ENCODE measurements at regions of chr14 and their contacts with region 1.

Region 1: GRCh38 chr14:101628471-101628966 is 67.2 kb downstream of the DIO3 start:
- DNase-seq: no peak
- H3K4me3 ChIP-seq: peak overlapping the region in 1 of 2 donors; percentile 6
- H3K27ac ChIP-seq: no peak overlapping the region
- H3K4me1 ChIP-seq: peaks cover 15% of the 10 kb centered on the region
- H3K27me3 ChIP-seq: no peaks in the 10 kb centered on the region
- CTCF ChIP-seq: peak; percentile 97 to 99 (median 99)
- POLR2A ChIP-seq: no peak

Region 2: DNA sequence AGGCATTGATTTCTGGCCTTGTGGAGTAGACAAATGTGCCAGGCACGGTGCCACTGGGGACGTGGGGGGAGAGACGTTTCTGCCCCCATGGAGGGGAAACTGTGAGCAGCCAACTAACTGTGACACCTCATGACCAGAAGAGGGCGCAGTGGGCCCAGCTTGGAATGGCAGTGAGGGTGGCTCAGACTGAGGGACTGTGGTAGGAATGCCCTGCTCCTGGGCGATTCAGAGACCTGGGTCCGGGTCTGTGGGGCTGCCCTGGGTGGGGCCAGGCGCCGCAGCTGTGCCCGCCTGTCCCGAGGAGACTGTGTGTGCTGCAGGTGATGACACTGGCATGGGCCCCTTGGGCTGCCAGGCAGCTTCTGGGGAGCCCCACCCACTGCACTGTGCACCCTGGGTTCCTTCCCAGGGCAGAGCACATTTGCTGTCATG is 1244.8 kb before region 1 on chr14:
- intact Hi-C with region 1: loop called (anchors 10 kb)
- DNase-seq: no peak
- H3K4me3 ChIP-seq: no peak overlapping the region
- H3K27ac ChIP-seq: no peak overlapping the region
- H3K4me1 ChIP-seq: peaks cover 5% of the 10 kb centered on the region
- H3K27me3 ChIP-seq: no peaks in the 10 kb centered on the region
- CTCF ChIP-seq: peak; percentile 51 to 64 (median 61)
- POLR2A ChIP-seq: no peak

Region 3: GRCh38 chr14:100660882-100661635 is 967.5 kb before region 1 on chr14:
- intact Hi-C with region 1: loop called (anchors 1 kb)
- DNase-seq: no peak
- H3K4me3 ChIP-seq: no peak overlapping the region
- H3K27ac ChIP-seq: no peak overlapping the region
- H3K4me1 ChIP-seq: no peaks in the 10 kb centered on the region
- H3K27me3 ChIP-seq: no peaks in the 10 kb centered on the region
- CTCF ChIP-seq: no peak
- POLR2A ChIP-seq: no peak

Region 4: DNA sequence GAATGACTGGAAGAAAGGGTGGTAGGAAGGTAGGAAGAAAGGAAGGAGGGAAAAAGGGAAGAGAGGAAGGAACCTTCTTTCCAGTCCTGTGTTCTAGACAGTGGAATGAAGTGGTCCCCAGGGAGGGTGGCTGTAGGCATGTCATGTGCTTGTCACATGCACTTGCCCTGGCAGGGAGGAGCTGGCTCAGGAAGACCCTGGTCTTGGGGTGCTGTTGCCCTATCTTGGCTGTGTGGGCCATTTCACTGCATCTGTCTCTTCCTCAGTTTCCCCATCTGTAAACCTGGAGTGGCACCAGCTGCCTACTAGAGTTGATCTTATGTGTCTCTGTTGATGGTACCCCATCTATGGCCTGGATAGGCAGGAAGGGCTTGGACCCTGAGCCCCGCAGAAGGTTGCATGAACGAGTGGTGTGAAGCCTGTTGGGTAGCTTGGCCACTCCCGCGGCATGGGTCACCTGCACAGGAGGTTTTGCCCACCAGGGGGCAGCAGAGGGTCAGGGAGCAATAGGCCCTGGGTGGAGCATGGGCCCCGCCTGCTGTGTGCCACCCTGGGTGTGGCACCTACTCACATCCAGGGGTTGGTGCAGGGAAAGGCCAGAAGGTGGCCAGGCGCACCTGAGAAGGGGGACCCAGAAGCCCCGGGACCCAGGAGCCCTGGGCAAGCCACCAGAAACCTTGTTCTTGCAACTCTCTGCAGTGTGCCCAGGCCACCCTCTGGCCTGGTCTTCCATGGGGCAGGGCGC is 777.5 kb before region 1 on chr14:
- intact Hi-C with region 1: loop called (anchors 10 kb)
- DNase-seq: no peak
- H3K4me3 ChIP-seq: no peak overlapping the region
- H3K27ac ChIP-seq: peak overlapping the region; percentile 66
- H3K4me1 ChIP-seq: peaks cover 18% of the 10 kb centered on the region
- H3K27me3 ChIP-seq: no peaks in the 10 kb centered on the region
- CTCF ChIP-seq: peak; percentile 19 to 53 (median 29)
- POLR2A ChIP-seq: no peak

Region 5: DNA sequence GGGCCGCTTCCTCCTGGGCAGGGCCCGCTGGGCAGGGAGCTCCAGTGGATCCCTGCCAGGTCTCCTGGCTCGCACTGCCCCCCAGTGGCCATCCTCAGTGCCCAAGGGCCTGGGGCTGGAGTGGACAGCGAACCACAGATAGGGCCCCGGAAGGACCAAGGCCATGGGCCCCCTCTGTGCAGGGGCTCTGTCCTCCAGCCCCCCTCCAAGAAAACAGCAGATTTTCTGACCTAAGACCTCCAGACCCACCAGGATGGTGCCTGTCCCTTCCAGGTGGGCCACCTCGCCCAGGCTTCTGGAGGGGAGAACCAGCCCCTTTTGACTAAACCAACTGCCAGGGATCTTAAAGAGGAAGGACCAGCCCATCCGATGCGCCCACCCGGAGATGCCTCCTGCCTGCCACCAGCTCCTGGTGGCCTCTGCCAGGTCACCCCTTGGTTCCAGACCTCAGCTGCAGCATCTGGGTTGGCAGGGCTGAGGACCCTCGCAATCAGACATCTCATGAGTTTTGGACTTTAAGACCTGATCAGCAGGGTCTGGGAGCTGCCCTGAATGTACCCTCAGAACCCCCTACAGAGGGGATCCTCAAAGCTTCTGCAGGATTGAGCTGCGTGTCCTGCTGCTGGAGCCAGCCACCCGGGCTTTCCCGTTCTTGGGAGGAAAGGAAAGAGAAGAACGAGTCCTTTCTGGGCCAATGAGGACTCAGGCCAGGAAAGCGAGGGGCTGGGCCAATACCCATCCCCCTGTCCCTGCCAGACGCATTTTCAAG is 393.0 kb before region 1 on chr14:
- intact Hi-C with region 1: loop called (anchors 10 kb)
- DNase-seq: no peak
- H3K4me3 ChIP-seq: no peak overlapping the region
- H3K27ac ChIP-seq: no peak overlapping the region
- H3K4me1 ChIP-seq: no peaks in the 10 kb centered on the region
- H3K27me3 ChIP-seq: no peaks in the 10 kb centered on the region
- CTCF ChIP-seq: peak in 2 of 3 experiments; percentile 30 to 48
- POLR2A ChIP-seq: no peak